Endothelial cell of umbilical vein (primary cell): ENCODE measurements at regions of chr11 and their contacts with region 1.

Region 1: DNA sequence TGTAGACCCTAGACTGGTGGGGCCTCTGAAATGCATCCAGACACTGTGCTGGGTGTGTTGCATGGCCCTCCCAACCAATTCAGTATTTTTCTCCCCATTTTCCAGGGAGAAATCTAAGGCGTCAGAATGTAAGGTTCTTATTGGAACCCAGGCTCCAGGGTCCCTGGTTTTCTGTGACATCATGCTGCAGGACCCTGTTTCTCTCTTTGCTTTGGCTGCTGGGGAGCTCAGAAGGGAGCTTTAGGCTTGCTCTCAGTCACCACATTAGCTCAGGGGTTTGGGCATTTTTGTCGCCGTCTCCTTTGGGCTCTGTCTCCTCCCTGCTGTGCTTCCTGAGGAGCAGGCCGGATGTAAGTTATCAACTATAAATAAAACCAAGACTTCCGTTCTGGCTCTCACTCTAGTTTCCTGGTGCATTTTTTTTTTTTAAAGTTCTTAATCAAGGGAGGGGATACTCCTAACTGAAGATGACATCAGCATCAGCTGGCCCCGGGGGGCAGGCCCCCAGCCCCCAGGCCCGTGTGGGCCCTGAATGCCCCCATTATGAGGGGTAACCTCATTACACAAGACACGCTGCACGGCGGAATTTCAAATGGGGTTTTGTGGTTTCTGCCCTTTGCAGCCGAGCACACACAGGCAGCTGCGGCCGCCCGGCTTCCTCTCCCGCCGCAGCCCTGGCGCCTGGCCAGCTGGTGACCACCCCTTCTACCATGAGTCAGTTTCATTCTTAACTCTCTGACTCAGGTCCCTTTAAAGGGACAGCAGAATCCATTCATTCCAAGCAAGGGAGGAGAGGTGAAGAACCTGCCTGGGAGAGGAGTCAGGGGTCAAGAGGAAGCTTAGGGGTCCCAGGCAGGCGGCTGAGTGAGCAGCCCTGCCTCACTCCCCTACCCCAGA is 3.2 kb downstream of the MYEOV start:
- DNase-seq: peak; percentile 98
- H3K4me3 ChIP-seq: peak overlapping the region in 1 of 3 experiments; percentile 29
- H3K27ac ChIP-seq: peak overlapping the region; percentile 98
- H3K4me1 ChIP-seq: peaks cover 63% of the 10 kb centered on the region
- H3K27me3 ChIP-seq: no peaks in the 10 kb centered on the region
- CTCF ChIP-seq: no peak
- POLR2A ChIP-seq: no peak

Region 2: GRCh38 chr11:68857037-68857586 is 440.0 kb before region 1 on chr11:
- CTCF ChIA-PET with region 1: no interaction called
- POLR2A ChIA-PET with region 1: no interaction called
- dilution Hi-C with region 1: no loop called
- intact Hi-C with region 1: no loop called
- DNase-seq: no peak
- H3K4me3 ChIP-seq: no peak overlapping the region
- H3K27ac ChIP-seq: no peak overlapping the region
- H3K4me1 ChIP-seq: peaks cover 12% of the 10 kb centered on the region
- H3K27me3 ChIP-seq: peaks cover 9 to 14% of the 10 kb centered on the region in 2 experiments
- CTCF ChIP-seq: no peak
- POLR2A ChIP-seq: no peak

Region 3: DNA sequence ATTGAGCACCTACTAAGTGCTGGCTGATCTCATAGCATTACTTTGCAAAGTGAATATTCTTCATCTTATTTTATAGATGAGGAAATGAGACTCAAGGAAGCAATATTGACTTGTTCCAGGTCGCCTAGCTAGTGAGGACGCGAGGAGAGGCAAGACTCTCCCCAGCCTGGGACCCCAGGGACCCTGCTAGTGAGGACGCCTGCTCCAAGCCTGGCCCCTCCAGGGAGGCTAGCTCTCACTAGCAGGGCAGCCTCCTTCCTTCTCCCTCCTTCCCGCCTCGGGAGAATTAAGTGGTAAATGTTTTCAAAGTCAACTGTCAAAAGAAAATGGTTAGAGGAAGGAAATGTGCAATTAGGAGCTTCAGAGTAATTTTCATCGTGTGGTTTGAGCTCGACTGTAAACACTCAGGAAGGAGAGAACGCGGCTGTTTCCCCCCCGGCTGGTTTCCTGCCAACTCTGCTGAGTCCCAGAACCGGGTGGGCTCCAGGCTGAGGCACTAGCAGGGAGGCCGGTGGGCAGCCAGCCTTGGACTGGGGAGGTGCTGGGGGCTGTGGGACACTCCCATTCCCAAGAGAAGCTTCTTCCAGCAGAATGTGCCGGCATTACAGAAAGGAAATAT is 14.7 kb after region 1 on chr11:
- CTCF ChIA-PET with region 1: interaction called, 25 read pairs
- POLR2A ChIA-PET with region 1: interaction called, 6 read pairs
- dilution Hi-C with region 1: no loop called
- intact Hi-C with region 1: loop called (anchors 1 kb)
- DNase-seq: peak; percentile 83
- H3K4me3 ChIP-seq: no peak overlapping the region
- H3K27ac ChIP-seq: peak overlapping the region; percentile 62
- H3K4me1 ChIP-seq: peaks cover 25% of the 10 kb centered on the region
- H3K27me3 ChIP-seq: no peaks in the 10 kb centered on the region
- CTCF ChIP-seq: no peak
- POLR2A ChIP-seq: no peak

Region 4: GRCh38 chr11:69352715-69353325 is 55.7 kb after region 1 on chr11:
- CTCF ChIA-PET with region 1: interaction called, 17 read pairs
- POLR2A ChIA-PET with region 1: interaction called, 4 read pairs
- dilution Hi-C with region 1: no loop called
- intact Hi-C with region 1: loop called (anchors 1 kb)
- DNase-seq: peak; percentile 96
- H3K4me3 ChIP-seq: no peak overlapping the region
- H3K27ac ChIP-seq: peak overlapping the region; percentile 90
- H3K4me1 ChIP-seq: peaks cover 47% of the 10 kb centered on the region
- H3K27me3 ChIP-seq: no peaks in the 10 kb centered on the region
- CTCF ChIP-seq: no peak
- POLR2A ChIP-seq: peak; percentile 73

Region 5: GRCh38 chr11:69449320-69450063 is 152.4 kb after region 1 on chr11:
- CTCF ChIA-PET with region 1: interaction called, 14 read pairs
- POLR2A ChIA-PET with region 1: interaction called, 3 read pairs
- dilution Hi-C with region 1: no loop called
- intact Hi-C with region 1: loop called (anchors 1 kb)
- DNase-seq: peak; percentile 92
- H3K4me3 ChIP-seq: no peak overlapping the region
- H3K27ac ChIP-seq: peak overlapping the region; percentile 98
- H3K4me1 ChIP-seq: peaks cover 38% of the 10 kb centered on the region
- H3K27me3 ChIP-seq: no peaks in the 10 kb centered on the region
- CTCF ChIP-seq: no peak
- POLR2A ChIP-seq: peak; percentile 84

Region 6: GRCh38 chr11:69670158-69670845 is 373.2 kb after region 1 on chr11:
- CTCF ChIA-PET with region 1: interaction called, 7 read pairs
- POLR2A ChIA-PET with region 1: no interaction called
- dilution Hi-C with region 1: no loop called
- intact Hi-C with region 1: loop called (anchors 1 kb)
- DNase-seq: peak; percentile 83
- H3K4me3 ChIP-seq: no peak overlapping the region
- H3K27ac ChIP-seq: no peak overlapping the region
- H3K4me1 ChIP-seq: peaks cover 9% of the 10 kb centered on the region
- H3K27me3 ChIP-seq: no peaks in the 10 kb centered on the region
- CTCF ChIP-seq: peak; percentile 94 to 97
- POLR2A ChIP-seq: peak; percentile 45